ENCODE measurements at regions of chr5 and their contacts with region 1.

Region 1: GRCh38 chr5:96934708-96935558 is 947 bp upstream of the LNPEP start:
- DNase-seq: peak; percentile 92 to 98 (median 97)
- ATAC-seq: peak; percentile 81
- H3K4me3 ChIP-seq: peak overlapping the region; percentile 93
- H3K4me3 Mint-ChIP-seq: peak overlapping the region; percentile 84 to 100 (median 94)
- H3K27ac ChIP-seq: peak overlapping the region; percentile 86
- H3K27ac Mint-ChIP-seq: peak overlapping the region; percentile 95 to 99 (median 97)
- H3K4me1 ChIP-seq: peaks cover 34 to 46% of the 10 kb centered on the region in 2 donors
- H3K4me1 Mint-ChIP-seq: peaks cover 53 to 70% (median 64%) of the 10 kb centered on the region in 7 donors
- H3K27me3 ChIP-seq: no peaks in the 10 kb centered on the region
- H3K27me3 Mint-ChIP-seq: no peaks in the 10 kb centered on the region

Region 2: GRCh38 chr5:95631991-95632675 is 1302.8 kb before region 1 on chr5:
- CTCF ChIA-PET with region 1: no interaction called
- POLR2A ChIA-PET with region 1: no interaction called
- intact Hi-C with region 1: loop called in 1 of 2 experiments (anchors 2 kb)
- DNase-seq: peak; percentile 27 to 86 (median 79)
- ATAC-seq: peak; percentile 98
- H3K4me3 ChIP-seq: peak overlapping the region; percentile 8
- H3K4me3 Mint-ChIP-seq: peak overlapping the region; percentile 21 to 79 (median 69)
- H3K27ac ChIP-seq: peak overlapping the region; percentile 65
- H3K27ac Mint-ChIP-seq: peak overlapping the region; percentile 90 to 99 (median 94)
- H3K4me1 ChIP-seq: peaks cover 6 to 24% of the 10 kb centered on the region in 2 donors
- H3K4me1 Mint-ChIP-seq: peaks cover 15 to 52% (median 35%) of the 10 kb centered on the region in 7 donors
- H3K27me3 ChIP-seq: no peaks in the 10 kb centered on the region
- H3K27me3 Mint-ChIP-seq: peaks cover 0 to 10% (median 0%) of the 10 kb centered on the region in 5 donors

Region 3: GRCh38 chr5:96536991-96537785 is 397.7 kb before region 1 on chr5:
- CTCF ChIA-PET with region 1: no interaction called
- POLR2A ChIA-PET with region 1: no interaction called
- intact Hi-C with region 1: loop called in 1 of 2 experiments (anchors 1 kb)
- DNase-seq: peak in 7 of 9 donors; percentile 54 to 79 (median 73)
- ATAC-seq: peak; percentile 97
- H3K4me3 ChIP-seq: peak overlapping the region; percentile 14
- H3K4me3 Mint-ChIP-seq: peak overlapping the region in 9 of 10 donors; percentile 26 to 76 (median 61)
- H3K27ac ChIP-seq: peak overlapping the region; percentile 41
- H3K27ac Mint-ChIP-seq: peak overlapping the region; percentile 82 to 94 (median 88)
- H3K4me1 ChIP-seq: peaks cover 20 to 23% of the 10 kb centered on the region in 2 donors
- H3K4me1 Mint-ChIP-seq: peaks cover 15 to 41% (median 32%) of the 10 kb centered on the region in 7 donors
- H3K27me3 ChIP-seq: no peaks in the 10 kb centered on the region
- H3K27me3 Mint-ChIP-seq: peaks cover 0 to 6% (median 0%) of the 10 kb centered on the region in 5 donors

Region 4: GRCh38 chr5:96868603-96869371 is 66.1 kb before region 1 on chr5:
- CTCF ChIA-PET with region 1: interaction called, 15 read pairs
- POLR2A ChIA-PET with region 1: interaction called, 85 read pairs
- intact Hi-C with region 1: loop called (anchors 1 kb)
- DNase-seq: peak in 7 of 9 donors; percentile 45 to 75 (median 58)
- ATAC-seq: peak; percentile 97
- H3K4me3 ChIP-seq: no peak overlapping the region
- H3K4me3 Mint-ChIP-seq: peak overlapping the region in 3 of 10 donors; percentile 1 to 63 (median 29)
- H3K27ac ChIP-seq: no peak overlapping the region
- H3K27ac Mint-ChIP-seq: peak overlapping the region in 6 of 9 donors; percentile 10 to 93 (median 42)
- H3K4me1 ChIP-seq: peaks cover 0 to 40% of the 10 kb centered on the region in 2 donors
- H3K4me1 Mint-ChIP-seq: peaks cover 15 to 49% (median 47%) of the 10 kb centered on the region in 7 donors
- H3K27me3 ChIP-seq: no peaks in the 10 kb centered on the region
- H3K27me3 Mint-ChIP-seq: peaks cover 0 to 4% (median 0%) of the 10 kb centered on the region in 5 donors

Region 5: GRCh38 chr5:96952118-96952750 is 17.3 kb after region 1 on chr5:
- CTCF ChIA-PET with region 1: interaction called, 3 read pairs
- POLR2A ChIA-PET with region 1: interaction called, 14 read pairs
- intact Hi-C with region 1: loop called in 1 of 2 experiments (anchors 1 kb)
- DNase-seq: no peak
- ATAC-seq: no peak
- H3K4me3 ChIP-seq: no peak overlapping the region
- H3K4me3 Mint-ChIP-seq: peak overlapping the region in 6 of 10 donors; percentile 22 to 56 (median 40)
- H3K27ac ChIP-seq: no peak overlapping the region
- H3K27ac Mint-ChIP-seq: peak overlapping the region in 8 of 9 donors; percentile 72 to 91 (median 80)
- H3K4me1 ChIP-seq: peaks cover 29 to 39% of the 10 kb centered on the region in 2 donors
- H3K4me1 Mint-ChIP-seq: peaks cover 54 to 93% (median 83%) of the 10 kb centered on the region in 7 donors
- H3K27me3 ChIP-seq: no peaks in the 10 kb centered on the region
- H3K27me3 Mint-ChIP-seq: no peaks in the 10 kb centered on the region

Region 6: GRCh38 chr5:97009212-97009898 is 74.4 kb after region 1 on chr5:
- CTCF ChIA-PET with region 1: no interaction called
- POLR2A ChIA-PET with region 1: interaction called, 7 read pairs
- intact Hi-C with region 1: loop called in 1 of 2 experiments (anchors 1 kb)
- DNase-seq: peak in 7 of 9 donors; percentile 25 to 63 (median 49)
- ATAC-seq: peak; percentile 79
- H3K4me3 ChIP-seq: no peak overlapping the region
- H3K4me3 Mint-ChIP-seq: peak overlapping the region; percentile 12 to 77 (median 64)
- H3K27ac ChIP-seq: peak overlapping the region; percentile 9
- H3K27ac Mint-ChIP-seq: peak overlapping the region; percentile 1 to 82 (median 72)
- H3K4me1 ChIP-seq: peaks cover 10 to 21% of the 10 kb centered on the region in 2 donors
- H3K4me1 Mint-ChIP-seq: peaks cover 22 to 52% (median 30%) of the 10 kb centered on the region in 7 donors
- H3K27me3 ChIP-seq: no peaks in the 10 kb centered on the region
- H3K27me3 Mint-ChIP-seq: no peaks in the 10 kb centered on the region

Region 7: DNA sequence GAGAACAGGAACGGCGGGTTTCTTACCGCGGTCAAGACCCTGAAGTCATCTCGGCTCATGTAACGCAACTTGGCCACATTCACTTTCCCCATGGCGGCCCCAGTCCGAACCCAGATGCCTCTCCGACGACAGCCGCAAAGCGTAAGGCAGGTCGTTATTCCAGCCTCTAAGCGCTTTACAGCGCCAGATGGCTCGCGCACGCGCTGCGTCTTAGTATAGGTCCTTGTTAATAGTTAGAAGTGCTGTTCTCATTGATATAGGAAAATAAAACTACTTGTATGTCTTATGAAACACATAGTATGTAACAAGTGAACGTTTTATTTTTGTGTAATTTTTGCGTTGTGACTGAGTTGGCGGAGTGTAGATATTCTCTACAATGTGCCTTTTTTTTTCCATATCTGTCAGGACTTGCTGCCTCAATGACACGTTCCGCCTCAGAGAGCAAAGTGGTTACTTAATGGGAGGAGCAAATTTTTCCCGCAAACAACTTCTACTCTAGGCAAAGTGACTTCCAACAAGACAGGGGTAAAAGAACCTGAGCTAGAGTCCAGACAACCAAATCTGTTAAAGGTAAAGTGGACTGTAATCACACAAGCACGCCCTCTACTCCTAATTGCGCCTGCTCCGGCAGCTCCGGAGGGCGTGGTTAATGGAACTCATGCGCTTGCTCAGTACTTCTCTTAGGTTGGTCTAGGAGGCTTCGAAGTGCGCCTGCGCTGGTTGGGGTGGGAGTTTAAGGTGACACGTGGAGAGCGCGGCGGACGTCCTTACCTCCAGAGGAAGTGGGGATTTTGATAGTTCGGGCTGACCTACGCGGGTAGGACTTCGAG is 248.4 kb after region 1 on chr5 and contains the start of gene RIOK2:
- CTCF ChIA-PET with region 1: no interaction called
- POLR2A ChIA-PET with region 1: no interaction called
- intact Hi-C with region 1: loop called (anchors 1 kb)
- DNase-seq: peak; percentile 77 to 93 (median 91)
- ATAC-seq: peak; percentile 96
- H3K4me3 ChIP-seq: peak within 1 kb of the TSS; percentile 82
- H3K4me3 Mint-ChIP-seq: peak within 1 kb of the TSS; percentile 89 to 98 (median 94)
- H3K27ac ChIP-seq: peak within 1 kb of the TSS; percentile 94
- H3K27ac Mint-ChIP-seq: peak within 1 kb of the TSS; percentile 99 to 100 (median 100)
- H3K4me1 ChIP-seq: peaks cover 4 to 14% of the 10 kb centered on the region in 2 donors
- H3K4me1 Mint-ChIP-seq: peaks cover 23 to 54% (median 44%) of the 10 kb centered on the region in 7 donors
- H3K27me3 ChIP-seq: no peaks in the 10 kb centered on the region
- H3K27me3 Mint-ChIP-seq: peaks cover 0 to 3% (median 0%) of the 10 kb centered on the region in 5 donors
- total RNA-seq, gene RIOK2: 18.8 to 36.0 (median 28.5) TPM

Region 8: DNA sequence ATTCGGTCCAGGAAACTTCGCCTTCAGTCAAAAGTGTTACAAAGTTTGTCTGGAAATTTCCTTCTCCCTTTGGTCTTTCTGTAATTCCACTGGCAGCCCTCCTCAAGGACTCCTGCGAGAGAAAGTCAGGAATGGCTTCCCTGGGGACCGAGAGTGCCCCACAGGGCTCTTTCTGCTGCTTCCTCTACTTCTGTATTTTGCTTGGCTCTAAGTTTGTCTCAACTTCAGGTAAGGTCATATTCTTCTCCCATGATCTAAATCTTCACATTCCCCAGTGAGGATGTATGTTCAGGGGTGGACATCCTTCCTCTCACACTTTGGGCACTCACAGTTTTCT is 258.4 kb after region 1 on chr5:
- CTCF ChIA-PET with region 1: no interaction called
- POLR2A ChIA-PET with region 1: no interaction called
- intact Hi-C with region 1: no loop called
- DNase-seq: no peak
- ATAC-seq: no peak
- H3K4me3 ChIP-seq: no peak overlapping the region
- H3K4me3 Mint-ChIP-seq: no peak overlapping the region
- H3K27ac ChIP-seq: no peak overlapping the region
- H3K27ac Mint-ChIP-seq: no peak overlapping the region
- H3K4me1 ChIP-seq: peaks cover 0 to 8% of the 10 kb centered on the region in 2 donors
- H3K4me1 Mint-ChIP-seq: peaks cover 5 to 18% (median 8%) of the 10 kb centered on the region in 7 donors
- H3K27me3 ChIP-seq: no peaks in the 10 kb centered on the region
- H3K27me3 Mint-ChIP-seq: peaks cover 0 to 14% (median 0%) of the 10 kb centered on the region in 5 donors

Measured in naive thymus-derived CD4-positive, alpha-beta T cell (primary cell).